PC-9 (cell line): ENCODE measurements at regions of chr2 and their contacts with region 1.

Region 1: GRCh38 chr2:64831134-64831976 is 157.8 kb upstream of the SLC1A4 start:
- DNase-seq: peak; percentile 99 to 100
- H3K4me3 ChIP-seq: peak overlapping the region; percentile 36; the same call in 1 of the 2 replicates
- H3K27ac ChIP-seq: peak overlapping the region; percentile 83
- H3K4me1 ChIP-seq: peaks cover 53% of the 10 kb centered on the region
- H3K27me3 ChIP-seq: no peaks in the 10 kb centered on the region
- CTCF ChIP-seq: peak; percentile 99

Region 2: DNA sequence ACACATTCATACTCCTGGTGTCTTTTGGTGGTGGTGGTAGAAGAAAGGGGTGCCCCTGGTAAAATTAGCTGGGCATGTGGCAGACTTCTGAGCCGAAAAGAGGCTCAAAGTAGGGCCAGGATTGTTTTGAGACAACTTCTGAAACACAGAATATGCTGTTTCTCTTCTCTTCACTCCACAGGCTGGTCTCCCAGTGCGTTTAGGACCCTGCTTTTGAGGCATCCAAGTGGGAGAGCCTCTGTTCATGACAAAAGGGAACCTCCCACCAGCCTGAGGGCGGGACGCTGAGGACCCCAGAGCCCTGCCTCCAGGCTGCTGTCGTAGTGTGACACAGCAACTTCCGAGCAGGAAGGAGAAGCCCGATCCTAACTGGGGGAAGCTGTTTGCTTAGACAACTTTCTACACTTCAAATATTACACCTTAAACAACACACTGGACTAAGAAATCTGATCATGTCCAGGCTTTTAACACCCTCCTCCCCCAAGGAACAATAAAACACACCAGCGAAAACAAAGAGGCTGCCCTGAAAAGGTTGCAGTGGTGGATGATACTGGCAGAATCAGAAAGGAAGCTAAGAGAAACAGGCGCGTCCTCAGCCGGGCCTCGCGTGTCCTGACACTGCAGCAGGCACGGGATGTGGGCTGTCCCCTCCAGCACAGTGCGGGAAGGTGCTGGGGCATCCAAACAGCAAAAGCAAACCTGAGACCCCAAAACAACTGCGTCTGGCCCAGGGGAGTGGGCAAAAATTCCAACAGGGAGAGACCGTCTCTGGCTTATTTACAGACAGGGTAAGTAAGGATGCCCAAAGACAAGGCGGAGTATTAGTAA is 187.0 kb before region 1 on chr2:
- CTCF ChIA-PET with region 1: interaction called, 7 read pairs
- POLR2A ChIA-PET with region 1: interaction called, 18 read pairs
- intact Hi-C with region 1: loop called (anchors 1 kb)
- DNase-seq: peak; percentile 83 to 85
- H3K4me3 ChIP-seq: peak overlapping the region; percentile 60
- H3K27ac ChIP-seq: peak overlapping the region; percentile 97
- H3K4me1 ChIP-seq: peaks cover 78% of the 10 kb centered on the region
- H3K27me3 ChIP-seq: no peaks in the 10 kb centered on the region
- CTCF ChIP-seq: no peak

Region 3: DNA sequence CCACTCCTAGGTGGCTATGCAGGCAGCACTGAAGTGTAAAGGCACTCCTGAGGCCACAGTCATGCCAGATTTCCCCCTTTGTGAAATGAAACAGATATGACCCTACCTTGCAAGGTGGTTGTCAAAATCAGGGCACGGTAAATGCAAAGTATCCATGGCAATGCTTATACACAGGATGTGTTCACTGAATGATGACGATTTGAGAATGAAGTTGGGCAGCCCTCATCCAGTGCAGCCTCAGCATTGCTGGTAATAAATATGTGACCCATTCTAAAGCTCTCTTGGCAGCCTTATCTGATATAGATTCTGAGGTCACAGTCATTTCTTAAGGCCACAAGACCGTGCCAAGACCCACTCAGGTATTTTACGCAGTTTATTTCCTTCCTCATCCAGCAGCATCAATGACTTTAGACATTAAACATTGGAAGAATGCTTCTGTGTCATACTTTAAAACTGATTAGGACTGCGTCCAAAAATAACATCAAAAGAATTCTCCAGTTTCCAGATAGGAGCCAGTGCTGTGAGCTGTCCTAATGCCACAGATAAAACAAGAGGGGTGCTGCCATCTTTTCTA is 52.2 kb before region 1 on chr2:
- CTCF ChIA-PET with region 1: interaction called, 3 read pairs
- POLR2A ChIA-PET with region 1: no interaction called
- intact Hi-C with region 1: loop called (anchors 1 kb)
- DNase-seq: peak; percentile 71 to 99
- H3K4me3 ChIP-seq: no peak overlapping the region
- H3K27ac ChIP-seq: peak overlapping the region; percentile 60
- H3K4me1 ChIP-seq: peaks cover 62% of the 10 kb centered on the region
- H3K27me3 ChIP-seq: no peaks in the 10 kb centered on the region
- CTCF ChIP-seq: no peak

Region 4: DNA sequence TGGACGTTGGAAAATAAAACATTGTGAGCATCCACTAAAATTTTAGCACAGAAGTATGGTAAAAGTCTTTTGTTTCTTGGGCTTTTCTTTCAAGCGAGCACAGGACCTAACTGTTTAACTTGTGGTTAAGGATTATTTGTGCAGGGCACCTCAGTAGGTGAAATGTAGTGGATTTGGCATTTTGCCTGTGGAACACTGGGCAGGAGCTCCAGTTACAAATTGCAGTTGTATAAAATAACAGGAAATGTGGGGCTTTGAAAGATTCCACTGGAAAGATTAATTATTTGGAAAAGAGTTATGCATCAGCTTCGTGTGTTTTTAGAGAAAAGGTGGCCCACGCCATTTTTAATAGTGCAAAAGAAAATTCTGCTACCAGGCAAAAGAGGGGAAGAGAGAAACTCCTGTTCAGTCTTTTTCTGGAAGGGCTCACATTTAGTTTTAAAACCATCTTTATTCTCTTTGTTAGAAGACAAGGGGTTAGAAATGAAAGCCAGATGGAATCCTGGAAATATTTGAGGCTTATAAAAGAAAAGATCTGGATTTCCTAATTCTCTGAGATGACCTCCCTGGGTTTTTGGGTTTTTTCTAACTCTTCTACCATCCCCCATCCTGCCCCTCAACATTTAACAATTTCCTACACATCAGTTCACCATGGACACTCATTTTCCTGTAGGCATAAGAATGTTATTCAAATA is 33.3 kb before region 1 on chr2:
- CTCF ChIA-PET with region 1: interaction called, 3 read pairs
- POLR2A ChIA-PET with region 1: no interaction called
- intact Hi-C with region 1: loop called (anchors 1 kb)
- DNase-seq: peak; percentile 63 to 90
- H3K4me3 ChIP-seq: peak overlapping the region; percentile 12; the same call in 1 of the 2 replicates
- H3K27ac ChIP-seq: peak overlapping the region; percentile 30
- H3K4me1 ChIP-seq: peaks cover 63% of the 10 kb centered on the region
- H3K27me3 ChIP-seq: no peaks in the 10 kb centered on the region
- CTCF ChIP-seq: no peak

Region 5: DNA sequence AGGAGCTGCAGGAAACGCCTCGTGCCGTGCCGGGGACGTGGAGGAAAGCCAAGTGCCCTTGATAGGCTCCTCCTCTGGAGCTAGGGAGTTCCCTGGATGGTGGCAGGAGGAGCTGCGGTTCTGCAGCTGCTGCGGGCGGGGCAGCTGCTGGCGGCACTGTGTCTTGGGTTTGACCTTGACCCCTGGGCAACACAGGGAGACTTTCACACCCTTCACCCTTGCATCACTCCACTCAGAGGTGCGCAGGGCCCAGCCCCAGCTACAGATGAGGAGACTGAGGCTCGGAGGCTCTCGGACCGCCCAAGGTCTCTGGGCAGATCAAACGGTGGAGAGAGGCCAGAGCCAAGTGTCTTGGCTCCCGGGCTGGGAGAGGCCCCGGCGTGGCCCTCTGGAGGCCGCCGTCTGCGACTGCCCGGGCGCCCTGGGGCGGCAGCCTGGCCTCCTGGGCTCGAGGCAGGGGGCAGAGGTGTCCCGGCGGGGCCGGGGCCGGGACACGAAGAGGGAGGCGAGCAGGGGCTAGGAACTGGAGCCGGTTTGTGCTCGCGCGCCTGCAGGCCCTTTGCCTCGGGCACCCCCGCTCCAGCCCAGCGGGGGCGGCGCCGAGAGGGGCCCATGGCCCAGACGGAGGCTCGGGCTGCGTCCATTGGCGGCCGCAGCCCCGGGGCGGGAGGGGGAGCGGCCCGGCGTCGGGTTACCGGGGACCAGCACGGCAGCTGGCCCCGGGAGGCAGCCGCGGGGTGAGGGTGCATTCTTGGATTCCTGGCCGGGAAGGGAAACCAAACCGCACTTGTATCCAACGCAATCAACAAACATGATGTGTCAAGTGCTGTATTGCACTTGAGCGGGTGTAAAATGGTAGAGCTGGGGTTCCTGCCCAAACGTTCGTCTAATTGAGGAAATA is 28.2 kb after region 1 on chr2:
- CTCF ChIA-PET with region 1: interaction called, 7 read pairs
- POLR2A ChIA-PET with region 1: no interaction called
- intact Hi-C with region 1: loop called (anchors 1 kb)
- DNase-seq: peak; percentile 91 to 94
- H3K4me3 ChIP-seq: peak overlapping the region; percentile 49
- H3K27ac ChIP-seq: peak overlapping the region; percentile 86
- H3K4me1 ChIP-seq: peaks cover 62% of the 10 kb centered on the region
- H3K27me3 ChIP-seq: no peaks in the 10 kb centered on the region
- CTCF ChIP-seq: no peak; the same call in 1 of the 2 replicates

Region 6: GRCh38 chr2:64865073-64865830 is 33.9 kb after region 1 on chr2:
- CTCF ChIA-PET with region 1: no interaction called
- POLR2A ChIA-PET with region 1: no interaction called
- intact Hi-C with region 1: loop called (anchors 1 kb)
- DNase-seq: peak; percentile 46 to 74
- H3K4me3 ChIP-seq: peak overlapping the region; percentile 89
- H3K27ac ChIP-seq: peak overlapping the region; percentile 74
- H3K4me1 ChIP-seq: peaks cover 39% of the 10 kb centered on the region
- H3K27me3 ChIP-seq: no peaks in the 10 kb centered on the region
- CTCF ChIP-seq: no peak; the same call in 1 of the 2 replicates

Region 7: DNA sequence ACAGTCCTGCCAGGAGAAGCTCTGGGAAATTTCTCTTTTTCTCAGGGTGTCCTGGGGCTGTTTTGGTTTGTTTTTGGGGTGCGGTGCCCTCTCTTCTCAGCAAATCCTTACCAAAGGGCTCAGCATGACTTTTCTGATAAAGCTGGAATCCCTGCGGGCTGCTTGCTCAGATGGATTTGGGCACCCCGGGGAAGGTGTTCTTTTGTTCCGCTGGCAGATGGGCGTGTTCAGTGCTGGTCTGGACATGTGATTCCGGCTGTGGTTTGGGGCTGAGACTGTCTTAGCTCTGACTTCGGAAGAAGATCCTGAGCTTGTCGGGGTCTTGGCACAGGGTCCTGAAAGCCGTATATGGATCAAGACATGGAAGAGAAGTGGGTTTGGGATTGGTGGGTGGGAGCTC is 735.3 kb after region 1 on chr2:
- CTCF ChIA-PET with region 1: no interaction called
- POLR2A ChIA-PET with region 1: no interaction called
- intact Hi-C with region 1: no loop called
- DNase-seq: peak; percentile 21 to 54
- H3K4me3 ChIP-seq: peak overlapping the region; percentile 24; the same call in 1 of the 2 replicates
- H3K27ac ChIP-seq: 0 out of 2 replicates have a peak overlapping the region, but pooled peaks have one; percentile 31
- H3K4me1 ChIP-seq: peaks cover 10% of the 10 kb centered on the region; the same call in 1 of the 2 replicates
- H3K27me3 ChIP-seq: no peaks in the 10 kb centered on the region
- CTCF ChIP-seq: no peak